ENCODE measurements at regions of chr1 and their contacts with region 1.

Region 1: DNA sequence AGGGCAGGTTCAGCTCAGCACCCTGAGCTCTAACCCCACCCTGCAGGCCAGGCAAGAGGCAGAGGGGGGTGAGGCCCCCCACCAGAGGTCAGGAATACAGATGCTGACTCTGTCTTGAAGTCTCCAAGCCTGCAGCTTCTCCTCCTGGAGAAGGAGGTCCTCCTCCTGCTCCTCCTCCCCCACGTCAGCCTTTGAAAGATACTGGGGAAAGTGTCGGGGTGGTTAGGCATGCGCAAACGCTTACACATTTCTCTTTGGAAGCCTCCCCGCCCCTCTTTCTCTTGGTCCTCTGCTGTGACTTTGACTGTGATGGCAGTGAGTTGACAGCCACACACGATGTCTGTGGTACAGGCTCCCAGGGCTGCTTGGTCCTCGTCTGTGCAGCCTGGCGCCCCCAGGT is 65.3 kb downstream of the SPSB1 start:
- DNase-seq: no peak
- ATAC-seq: no peak
- H3K4me3 ChIP-seq: no peak overlapping the region
- H3K27ac ChIP-seq: no peak overlapping the region
- H3K4me1 ChIP-seq: peaks cover 0 to 24% (median 9%) of the 10 kb centered on the region in 9 donors
- H3K27me3 ChIP-seq: no peaks in the 10 kb centered on the region
- CTCF ChIP-seq: no peak

Region 2: DNA sequence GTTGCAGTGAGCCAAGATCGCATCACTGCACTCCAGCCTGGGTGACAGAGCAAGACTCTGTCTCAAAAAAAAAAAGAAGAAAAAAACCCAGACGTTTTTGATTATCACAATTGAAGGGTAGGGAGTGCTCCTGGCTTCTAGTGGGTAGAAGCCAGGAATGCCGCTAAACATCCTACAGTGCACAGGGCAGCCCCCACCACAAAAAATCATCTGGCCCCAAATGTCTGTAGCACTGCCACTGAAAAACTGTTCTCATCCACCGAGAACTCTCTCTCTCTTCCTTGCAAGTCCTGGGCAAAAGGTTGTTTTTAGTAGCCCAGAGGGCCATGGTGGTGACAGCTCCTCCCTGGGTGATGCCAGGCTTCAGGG is 193.4 kb before region 1 on chr1:
- intact Hi-C with region 1: no loop called
- DNase-seq: no peak
- ATAC-seq: peak in 1 of 8 donors; percentile 4
- H3K4me3 ChIP-seq: no peak overlapping the region
- H3K27ac ChIP-seq: peak overlapping the region in 8 of 10 donors; percentile 63 to 91 (median 80)
- H3K4me1 ChIP-seq: peaks cover 11 to 48% (median 26%) of the 10 kb centered on the region in 9 donors
- H3K27me3 ChIP-seq: no peaks in the 10 kb centered on the region
- CTCF ChIP-seq: no peak

Region 3: GRCh38 chr1:9338397-9339246 is 19.3 kb before region 1 on chr1:
- intact Hi-C with region 1: loop called in 1 of 10 experiments (anchors 2 kb)
- DNase-seq: peak; percentile 33 to 39
- ATAC-seq: peak; percentile 42 to 71 (median 59)
- H3K4me3 ChIP-seq: no peak overlapping the region
- H3K27ac ChIP-seq: peak overlapping the region in 7 of 10 donors; percentile 14 to 48 (median 40)
- H3K4me1 ChIP-seq: peaks cover 12 to 48% (median 35%) of the 10 kb centered on the region in 9 donors
- H3K27me3 ChIP-seq: no peaks in the 10 kb centered on the region
- CTCF ChIP-seq: no peak